ENCODE measurements at regions of chr12 and their contacts with region 1.

Region 1: GRCh38 chr12:546921-547845 is 87.4 kb downstream of the B4GALNT3 start:
- DNase-seq: no peak
- H3K4me3 ChIP-seq: no peak overlapping the region
- H3K27ac ChIP-seq: no peak overlapping the region
- H3K4me1 ChIP-seq: peaks cover 7 to 25% (median 11%) of the 10 kb centered on the region in 4 donors
- H3K27me3 ChIP-seq: peaks cover 0 to 53% (median 0%) of the 10 kb centered on the region in 4 donors
- CTCF ChIP-seq: peak in 2 of 3 experiments; percentile 95 to 98
- EP300 ChIP-seq: no peak
- POLR2A ChIP-seq: no peak

Region 2: GRCh38 chr12:442235-442884 is 104.8 kb before region 1 on chr12:
- intact Hi-C with region 1: loop called (anchors 2 kb)
- DNase-seq: no peak
- H3K4me3 ChIP-seq: no peak overlapping the region
- H3K27ac ChIP-seq: no peak overlapping the region
- H3K4me1 ChIP-seq: no peaks in the 10 kb centered on the region
- H3K27me3 ChIP-seq: peaks cover 0 to 15% (median 0%) of the 10 kb centered on the region in 4 donors
- CTCF ChIP-seq: peak; percentile 75 to 82 (median 82)
- EP300 ChIP-seq: no peak
- POLR2A ChIP-seq: no peak

Region 3: GRCh38 chr12:459430-460258 is 87.5 kb before region 1 on chr12 and contains the start of gene B4GALNT3:
- intact Hi-C with region 1: loop called (anchors 5 kb)
- DNase-seq: no peak
- H3K4me3 ChIP-seq: peak within 1 kb of the TSS; percentile 59 to 71 (median 62)
- H3K27ac ChIP-seq: no peak within 1 kb of the TSS
- H3K4me1 ChIP-seq: peaks cover 9 to 21% (median 21%) of the 10 kb centered on the region in 4 donors
- H3K27me3 ChIP-seq: peaks cover 0 to 57% (median 8%) of the 10 kb centered on the region in 4 donors
- CTCF ChIP-seq: no peak
- EP300 ChIP-seq: no peak
- POLR2A ChIP-seq: no peak
- total RNA-seq, gene B4GALNT3: under 0.01 to 0.80 (median 0.36) TPM